Activated CD4-positive, alpha-beta T cell treated with anti-CD3 and anti-CD28 coated beads, Interleukin-2, amount 10 ng/mL, durations not matched to agents 7 days and 5 days (primary cell): ENCODE measurements at regions of chr1 and their contacts with region 1.

Region 1: DNA sequence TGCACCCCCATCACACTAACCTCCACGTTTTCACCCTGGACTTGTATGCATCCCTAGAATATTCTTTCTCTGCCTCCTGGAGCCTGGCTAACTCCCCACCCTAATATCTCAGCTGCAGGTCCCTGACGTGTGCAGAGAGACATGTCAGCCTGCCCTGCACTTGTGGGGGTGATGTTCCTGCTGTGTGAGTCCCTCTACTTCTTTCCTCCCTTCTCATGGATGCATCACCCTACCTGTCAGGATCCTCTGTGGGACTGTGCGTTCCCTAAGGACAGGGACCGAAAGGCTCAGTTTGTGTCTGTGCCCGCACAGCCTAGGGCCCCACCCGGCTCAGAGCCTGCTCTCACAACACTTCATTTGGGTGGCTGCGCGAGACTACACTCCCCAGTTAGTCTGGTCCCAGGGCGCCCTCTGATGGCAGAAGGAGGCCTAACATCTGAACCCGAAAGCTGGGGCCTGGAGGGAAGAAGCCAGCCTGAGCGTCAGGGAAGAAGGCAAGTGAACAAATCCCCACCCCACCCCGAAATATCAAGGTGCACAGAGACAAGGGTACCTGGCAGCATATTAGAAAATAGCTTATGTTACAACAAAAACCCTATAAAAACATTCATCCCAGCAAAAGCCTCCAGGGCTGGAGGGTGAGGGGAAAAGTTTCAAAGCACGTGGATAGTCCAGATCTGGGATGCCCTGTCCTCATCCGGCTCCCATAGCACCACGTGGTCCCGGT is 3.7 kb downstream of the CD52 start:
- DNase-seq: peak; percentile 96
- H3K4me3 Mint-ChIP-seq: peak overlapping the region; percentile 75
- H3K27ac Mint-ChIP-seq: peak overlapping the region; percentile 90
- H3K4me1 Mint-ChIP-seq: peaks cover 48% of the 10 kb centered on the region
- H3K27me3 Mint-ChIP-seq: no peaks in the 10 kb centered on the region

Region 2: DNA sequence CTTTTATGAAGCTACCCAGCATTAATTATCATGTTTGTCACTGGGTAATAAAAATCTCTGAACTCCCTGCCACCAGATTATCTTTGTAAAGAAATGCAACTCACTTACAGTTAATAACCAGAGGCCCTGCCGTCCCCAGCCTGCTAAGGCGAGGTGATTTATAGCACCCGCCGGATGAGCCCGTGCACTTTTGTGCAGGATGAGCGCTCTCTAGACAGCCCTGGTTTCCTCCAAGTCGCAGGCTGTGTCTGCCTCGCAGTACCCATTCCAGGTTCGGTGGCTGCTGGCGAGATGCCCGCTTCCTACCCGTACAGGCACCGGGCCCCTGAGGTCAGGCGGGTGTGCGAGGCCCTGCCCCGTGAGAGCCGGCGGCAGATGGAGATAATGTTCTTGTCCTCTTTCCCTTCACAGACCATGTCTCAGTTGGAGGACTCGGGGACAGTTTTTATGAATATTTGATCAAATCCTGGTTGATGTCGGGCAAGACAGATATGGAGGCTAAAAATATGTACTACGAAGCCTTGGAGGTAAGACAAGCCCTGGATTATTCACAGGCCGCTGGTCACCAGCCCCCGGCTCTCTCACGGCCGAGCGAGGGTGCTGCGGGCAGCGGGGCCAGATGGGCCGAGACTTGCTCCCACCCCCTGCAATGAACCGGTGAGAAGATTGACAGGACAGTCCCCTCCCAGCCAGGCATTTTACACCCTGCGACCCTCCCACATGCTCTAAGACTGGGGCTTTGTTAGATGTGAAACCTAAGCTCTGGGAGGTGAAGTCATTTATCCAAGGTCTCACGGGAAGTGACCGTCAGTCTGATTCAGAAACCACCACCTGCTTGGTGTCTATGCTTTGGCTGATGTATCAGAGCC is 550.0 kb before region 1 on chr1:
- CTCF ChIA-PET with region 1: no interaction called
- POLR2A ChIA-PET with region 1: no interaction called
- DNase-seq: peak; percentile 12
- H3K4me3 Mint-ChIP-seq: no peak overlapping the region
- H3K27ac Mint-ChIP-seq: no peak overlapping the region
- H3K4me1 Mint-ChIP-seq: peaks cover 57% of the 10 kb centered on the region
- H3K27me3 Mint-ChIP-seq: peaks cover 7% of the 10 kb centered on the region

Region 3: DNA sequence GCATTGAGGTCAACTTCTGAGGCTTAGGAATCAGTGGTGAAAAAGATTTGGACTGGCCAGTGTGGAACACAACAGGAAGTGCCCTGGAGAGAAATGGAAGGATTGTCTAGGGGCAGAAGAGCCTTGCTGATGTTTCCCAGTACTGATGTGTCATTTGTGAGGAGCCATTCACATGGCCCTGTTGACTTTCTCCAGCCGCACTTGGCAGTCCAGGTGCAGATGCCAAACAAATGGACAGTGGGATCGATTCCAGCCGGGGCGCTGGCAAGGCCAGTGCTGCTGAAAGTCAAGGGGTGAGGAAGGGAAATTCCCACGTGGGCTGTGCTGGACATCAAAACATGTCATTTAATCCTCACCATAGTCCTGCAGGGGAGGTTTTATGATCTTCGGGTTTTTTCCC is 249.2 kb before region 1 on chr1:
- CTCF ChIA-PET with region 1: no interaction called
- POLR2A ChIA-PET with region 1: no interaction called
- DNase-seq: no peak
- H3K4me3 Mint-ChIP-seq: no peak overlapping the region
- H3K27ac Mint-ChIP-seq: no peak overlapping the region
- H3K4me1 Mint-ChIP-seq: peaks cover 15% of the 10 kb centered on the region
- H3K27me3 Mint-ChIP-seq: peaks cover 31% of the 10 kb centered on the region

Region 4: GRCh38 chr1:26215246-26215645 is 106.2 kb before region 1 on chr1:
- CTCF ChIA-PET with region 1: no interaction called
- POLR2A ChIA-PET with region 1: no interaction called
- DNase-seq: no peak
- H3K4me3 Mint-ChIP-seq: no peak overlapping the region
- H3K27ac Mint-ChIP-seq: no peak overlapping the region
- H3K4me1 Mint-ChIP-seq: no peaks in the 10 kb centered on the region
- H3K27me3 Mint-ChIP-seq: peaks cover 8% of the 10 kb centered on the region

Region 5: DNA sequence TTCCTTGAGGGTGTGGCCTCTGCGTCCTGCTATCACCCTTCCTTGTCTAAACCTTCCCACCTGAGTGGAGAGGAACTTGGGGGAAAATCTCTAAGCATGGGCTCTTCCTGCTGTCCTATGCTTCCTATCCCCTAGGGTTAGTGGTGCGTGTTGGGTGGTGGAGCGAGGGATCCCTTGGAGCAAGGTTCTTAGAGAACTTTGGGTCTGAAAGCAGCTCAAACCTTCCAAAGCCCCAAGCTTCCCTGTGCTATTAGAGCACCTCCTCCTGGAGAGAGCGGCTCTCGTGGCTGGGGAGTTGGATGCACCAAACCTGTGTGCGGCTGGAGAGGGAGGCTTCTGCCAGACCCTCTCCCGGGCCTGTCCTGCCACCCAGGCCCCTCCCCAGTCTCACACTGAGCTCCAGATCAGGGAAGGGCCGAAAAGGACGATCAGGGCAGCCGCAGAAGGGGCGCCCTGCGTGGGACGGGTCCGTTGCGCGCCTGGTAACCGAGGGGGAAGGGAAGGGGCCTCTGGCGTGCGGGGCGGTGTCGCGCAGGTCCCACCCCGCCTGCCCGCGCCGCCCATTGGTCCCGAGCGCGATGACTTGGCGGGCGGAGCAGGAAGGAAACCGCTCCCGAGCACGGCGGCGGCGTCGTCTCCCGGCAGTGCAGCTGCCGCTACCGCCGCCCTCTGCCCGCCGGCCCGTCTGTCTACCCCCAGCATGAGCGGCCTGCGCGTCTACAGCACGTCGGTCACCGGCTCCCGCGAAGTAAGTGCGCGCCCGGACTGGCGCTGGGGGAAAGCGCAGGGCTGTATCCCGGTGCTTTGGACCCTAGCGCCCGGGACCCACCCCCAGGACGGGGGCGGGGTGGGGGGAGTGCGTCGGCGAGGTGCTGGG is 41.8 kb before region 1 on chr1 and contains the start of gene SH3BGRL3:
- CTCF ChIA-PET with region 1: interaction called, 442 read pairs
- POLR2A ChIA-PET with region 1: interaction called, 12 read pairs
- DNase-seq: peak; percentile 89
- H3K4me3 Mint-ChIP-seq: peak within 1 kb of the TSS; percentile 86
- H3K27ac Mint-ChIP-seq: peak within 1 kb of the TSS; percentile 90
- H3K4me1 Mint-ChIP-seq: peaks cover 86% of the 10 kb centered on the region
- H3K27me3 Mint-ChIP-seq: no peaks in the 10 kb centered on the region
- total RNA-seq, gene SH3BGRL3: 606 to 707 TPM

Region 6: DNA sequence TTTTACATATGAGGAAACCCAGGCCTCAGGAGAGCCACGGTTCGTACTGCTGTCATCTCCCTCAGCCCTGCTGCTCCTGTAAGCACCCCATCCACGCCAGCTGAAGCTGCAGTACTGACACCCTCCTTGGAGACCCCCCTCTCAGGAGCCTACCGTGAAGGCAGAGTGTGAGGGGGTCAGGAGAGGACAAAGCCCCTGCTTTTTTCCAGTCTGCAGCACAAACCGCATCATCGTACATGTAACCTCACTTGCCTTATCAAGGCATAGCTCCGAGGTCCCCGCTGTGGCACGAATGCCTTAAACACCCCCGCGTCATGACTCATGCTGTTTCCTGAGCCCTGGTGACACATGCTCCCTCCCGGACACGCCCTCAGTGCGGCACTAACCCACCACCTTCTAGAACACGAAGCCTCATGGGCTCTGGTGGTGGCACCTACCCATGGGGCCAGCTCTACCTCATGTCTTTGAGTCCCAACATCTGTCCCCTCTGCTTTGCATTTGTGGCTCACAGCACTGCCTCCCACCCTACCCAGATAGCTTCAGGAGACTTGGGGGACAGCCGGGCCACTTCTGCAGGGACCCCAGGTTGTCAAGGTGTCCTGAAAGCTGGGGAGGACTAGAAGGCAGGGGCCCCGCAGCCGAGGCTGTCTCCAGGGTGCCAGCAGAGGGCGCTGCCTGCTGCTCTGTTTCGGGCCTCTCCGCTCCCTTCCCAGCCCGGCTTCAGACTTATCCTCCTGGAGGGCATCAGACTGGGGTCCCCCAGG is 36.7 kb before region 1 on chr1:
- CTCF ChIA-PET with region 1: interaction called, 442 read pairs
- POLR2A ChIA-PET with region 1: interaction called, 12 read pairs
- DNase-seq: peak; percentile 96
- H3K4me3 Mint-ChIP-seq: peak overlapping the region; percentile 73
- H3K27ac Mint-ChIP-seq: peak overlapping the region; percentile 97
- H3K4me1 Mint-ChIP-seq: peaks cover 90% of the 10 kb centered on the region
- H3K27me3 Mint-ChIP-seq: no peaks in the 10 kb centered on the region

Region 7: GRCh38 chr1:26306290-26307229 is 14.9 kb before region 1 on chr1 and contains the start of gene UBXN11:
- CTCF ChIA-PET with region 1: interaction called, 81 read pairs
- POLR2A ChIA-PET with region 1: interaction called, 10 read pairs
- DNase-seq: peak; percentile 97
- H3K4me3 Mint-ChIP-seq: peak within 1 kb of the TSS; percentile 99
- H3K27ac Mint-ChIP-seq: peak within 1 kb of the TSS; percentile 93
- H3K4me1 Mint-ChIP-seq: peaks cover 48% of the 10 kb centered on the region
- H3K27me3 Mint-ChIP-seq: no peaks in the 10 kb centered on the region
- total RNA-seq, gene UBXN11: 48.6 to 51.3 TPM

Region 8: GRCh38 chr1:26336477-26337205 is 15.2 kb after region 1 on chr1:
- CTCF ChIA-PET with region 1: interaction called, 20 read pairs
- POLR2A ChIA-PET with region 1: no interaction called
- DNase-seq: peak; percentile 81
- H3K4me3 Mint-ChIP-seq: peak overlapping the region; percentile 87
- H3K27ac Mint-ChIP-seq: no peak overlapping the region
- H3K4me1 Mint-ChIP-seq: peaks cover 19% of the 10 kb centered on the region
- H3K27me3 Mint-ChIP-seq: peaks cover 14% of the 10 kb centered on the region

Region 9: GRCh38 chr1:26351591-26352337 is 30.3 kb after region 1 on chr1:
- CTCF ChIA-PET with region 1: interaction called, 11 read pairs
- POLR2A ChIA-PET with region 1: no interaction called
- DNase-seq: no peak
- H3K4me3 Mint-ChIP-seq: no peak overlapping the region
- H3K27ac Mint-ChIP-seq: no peak overlapping the region
- H3K4me1 Mint-ChIP-seq: peaks cover 5% of the 10 kb centered on the region
- H3K27me3 Mint-ChIP-seq: no peaks in the 10 kb centered on the region

Region 10: GRCh38 chr1:26482921-26483680 is 161.6 kb after region 1 on chr1:
- CTCF ChIA-PET with region 1: no interaction called
- POLR2A ChIA-PET with region 1: no interaction called
- DNase-seq: no peak
- H3K4me3 Mint-ChIP-seq: no peak overlapping the region
- H3K27ac Mint-ChIP-seq: no peak overlapping the region
- H3K4me1 Mint-ChIP-seq: no peaks in the 10 kb centered on the region
- H3K27me3 Mint-ChIP-seq: no peaks in the 10 kb centered on the region